Activated CD4-positive, alpha-beta memory T cell treated with anti-CD3 and anti-CD28 coated beads, Interleukin-2, amount 10 ng/mL, durations not matched to agents 7 days and 5 days (primary cell): ENCODE measurements at regions of chr12 and their contacts with region 1.

Region 1: GRCh38 chr12:54379401-54380201 is 4.9 kb downstream of the ZNF385A start:
- DNase-seq: peak; percentile 90
- H3K4me3 Mint-ChIP-seq: peak overlapping the region; percentile 22
- H3K27ac Mint-ChIP-seq: no peak overlapping the region
- H3K4me1 Mint-ChIP-seq: peaks cover 25% of the 10 kb centered on the region
- H3K27me3 Mint-ChIP-seq: peaks cover 3% of the 10 kb centered on the region

Region 2: GRCh38 chr12:54214553-54215406 is 164.8 kb before region 1 on chr12:
- CTCF ChIA-PET with region 1: interaction called, 14 read pairs
- POLR2A ChIA-PET with region 1: interaction called, 5 read pairs
- DNase-seq: peak; percentile 93
- H3K4me3 Mint-ChIP-seq: peak overlapping the region; percentile 85
- H3K27ac Mint-ChIP-seq: peak overlapping the region; percentile 68
- H3K4me1 Mint-ChIP-seq: peaks cover 47% of the 10 kb centered on the region
- H3K27me3 Mint-ChIP-seq: peaks cover 22% of the 10 kb centered on the region

Region 3: DNA sequence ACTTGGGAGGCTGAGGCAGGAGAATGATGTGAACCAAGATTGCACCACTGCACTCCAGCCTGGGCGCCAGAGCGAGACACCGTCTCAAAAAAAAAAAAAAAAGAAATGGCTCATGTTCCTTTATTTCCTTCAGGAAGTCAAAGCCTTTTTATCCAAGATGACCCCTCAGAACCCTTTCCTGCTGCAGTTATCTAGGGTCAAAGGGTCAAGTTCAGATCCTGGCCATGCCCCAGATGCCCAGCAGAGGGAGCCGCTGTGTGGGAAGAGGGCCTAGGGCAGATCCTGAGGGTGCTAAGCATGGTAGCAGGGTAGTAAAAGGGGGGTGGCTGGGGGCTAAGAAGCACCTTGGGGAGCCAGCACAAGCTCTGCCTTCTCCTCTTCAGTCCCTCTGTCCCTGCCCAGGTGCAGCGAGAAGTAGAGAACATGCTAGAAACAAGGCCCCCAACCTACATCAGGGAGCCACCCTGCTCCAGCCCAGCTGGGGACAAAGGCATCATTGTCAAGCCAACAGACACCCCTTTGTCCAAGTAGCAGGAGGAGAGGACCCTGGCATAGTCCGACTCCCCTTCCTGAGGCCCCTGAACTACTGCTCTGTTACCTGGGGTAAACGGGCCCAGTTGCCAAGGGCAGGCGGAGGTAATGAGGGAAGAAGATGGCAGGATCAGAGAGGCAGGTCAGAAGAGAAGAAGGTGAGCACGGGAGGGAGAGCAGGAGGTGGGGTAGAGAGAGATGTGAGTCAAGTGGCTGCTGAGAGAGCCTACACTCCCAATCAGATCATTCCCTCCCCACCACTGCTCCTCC is 85.2 kb before region 1 on chr12:
- CTCF ChIA-PET with region 1: interaction called, 38 read pairs
- POLR2A ChIA-PET with region 1: no interaction called
- DNase-seq: peak; percentile 75
- H3K4me3 Mint-ChIP-seq: no peak overlapping the region
- H3K27ac Mint-ChIP-seq: no peak overlapping the region
- H3K4me1 Mint-ChIP-seq: peaks cover 12% of the 10 kb centered on the region
- H3K27me3 Mint-ChIP-seq: peaks cover 18% of the 10 kb centered on the region

Region 4: GRCh38 chr12:54359033-54359761 is 20.4 kb before region 1 on chr12:
- CTCF ChIA-PET with region 1: interaction called, 13 read pairs
- POLR2A ChIA-PET with region 1: interaction called, 12 read pairs
- DNase-seq: peak; percentile 97
- H3K4me3 Mint-ChIP-seq: no peak overlapping the region
- H3K27ac Mint-ChIP-seq: no peak overlapping the region
- H3K4me1 Mint-ChIP-seq: peaks cover 23% of the 10 kb centered on the region
- H3K27me3 Mint-ChIP-seq: no peaks in the 10 kb centered on the region

Region 5: DNA sequence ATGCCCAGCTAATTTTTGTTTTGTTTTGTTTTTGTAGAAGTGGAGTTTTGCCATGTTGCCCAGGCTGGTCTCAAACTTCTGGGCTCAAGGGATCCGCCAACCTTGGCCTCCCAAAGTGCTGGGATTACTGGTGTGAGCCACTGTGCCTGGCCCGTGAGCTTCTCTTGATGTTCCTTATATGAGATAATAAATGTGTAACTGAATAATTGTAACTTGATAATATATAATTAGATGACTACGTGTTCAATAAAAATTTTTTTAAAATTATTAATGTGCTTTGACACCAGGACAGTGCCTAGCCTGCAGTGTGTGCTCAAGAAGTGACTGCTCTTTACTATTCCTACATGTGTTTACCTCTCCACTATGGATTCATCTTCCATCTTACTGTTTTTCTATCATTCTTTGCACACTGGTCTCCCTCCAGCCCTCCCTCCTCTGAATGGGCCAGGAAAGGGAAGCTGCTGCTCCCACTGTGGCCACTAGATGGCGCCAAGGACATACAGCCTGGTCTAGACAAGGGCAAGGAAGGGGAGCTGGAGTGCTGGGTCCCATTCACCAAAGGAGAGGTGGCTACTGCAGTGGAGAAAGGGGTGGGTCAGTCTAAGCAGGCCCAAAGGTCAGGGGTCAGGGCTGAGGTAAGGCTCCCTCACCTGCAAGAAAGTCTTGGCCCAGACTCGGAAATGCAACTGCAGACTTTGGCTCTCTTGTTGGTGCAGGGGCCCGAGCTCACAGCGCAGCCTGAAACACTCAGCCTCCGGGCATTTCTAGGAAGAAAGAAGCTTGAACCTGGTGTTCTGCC is 19.6 kb after region 1 on chr12:
- CTCF ChIA-PET with region 1: interaction called, 39 read pairs
- POLR2A ChIA-PET with region 1: no interaction called
- DNase-seq: peak; percentile 89
- H3K4me3 Mint-ChIP-seq: no peak overlapping the region
- H3K27ac Mint-ChIP-seq: no peak overlapping the region
- H3K4me1 Mint-ChIP-seq: peaks cover 27% of the 10 kb centered on the region
- H3K27me3 Mint-ChIP-seq: no peaks in the 10 kb centered on the region

Region 6: GRCh38 chr12:54419088-54419892 is 39.7 kb after region 1 on chr12 and contains the start of gene ITGA5:
- CTCF ChIA-PET with region 1: interaction called, 10 read pairs
- POLR2A ChIA-PET with region 1: no interaction called
- DNase-seq: peak; percentile 47
- H3K4me3 Mint-ChIP-seq: peak within 1 kb of the TSS; percentile 93
- H3K27ac Mint-ChIP-seq: peak within 1 kb of the TSS; percentile 85
- H3K4me1 Mint-ChIP-seq: peaks cover 58% of the 10 kb centered on the region
- H3K27me3 Mint-ChIP-seq: peaks cover 30% of the 10 kb centered on the region
- total RNA-seq, gene ITGA5: 102 to 107 TPM

Region 7: GRCh38 chr12:54486173-54486867 is 106.7 kb after region 1 on chr12:
- CTCF ChIA-PET with region 1: no interaction called
- POLR2A ChIA-PET with region 1: no interaction called
- DNase-seq: no peak
- H3K4me3 Mint-ChIP-seq: no peak overlapping the region
- H3K27ac Mint-ChIP-seq: no peak overlapping the region
- H3K4me1 Mint-ChIP-seq: peaks cover 2% of the 10 kb centered on the region
- H3K27me3 Mint-ChIP-seq: peaks cover 8% of the 10 kb centered on the region